ENCODE measurements at regions of chr6 and their contacts with region 1.

Region 1: DNA sequence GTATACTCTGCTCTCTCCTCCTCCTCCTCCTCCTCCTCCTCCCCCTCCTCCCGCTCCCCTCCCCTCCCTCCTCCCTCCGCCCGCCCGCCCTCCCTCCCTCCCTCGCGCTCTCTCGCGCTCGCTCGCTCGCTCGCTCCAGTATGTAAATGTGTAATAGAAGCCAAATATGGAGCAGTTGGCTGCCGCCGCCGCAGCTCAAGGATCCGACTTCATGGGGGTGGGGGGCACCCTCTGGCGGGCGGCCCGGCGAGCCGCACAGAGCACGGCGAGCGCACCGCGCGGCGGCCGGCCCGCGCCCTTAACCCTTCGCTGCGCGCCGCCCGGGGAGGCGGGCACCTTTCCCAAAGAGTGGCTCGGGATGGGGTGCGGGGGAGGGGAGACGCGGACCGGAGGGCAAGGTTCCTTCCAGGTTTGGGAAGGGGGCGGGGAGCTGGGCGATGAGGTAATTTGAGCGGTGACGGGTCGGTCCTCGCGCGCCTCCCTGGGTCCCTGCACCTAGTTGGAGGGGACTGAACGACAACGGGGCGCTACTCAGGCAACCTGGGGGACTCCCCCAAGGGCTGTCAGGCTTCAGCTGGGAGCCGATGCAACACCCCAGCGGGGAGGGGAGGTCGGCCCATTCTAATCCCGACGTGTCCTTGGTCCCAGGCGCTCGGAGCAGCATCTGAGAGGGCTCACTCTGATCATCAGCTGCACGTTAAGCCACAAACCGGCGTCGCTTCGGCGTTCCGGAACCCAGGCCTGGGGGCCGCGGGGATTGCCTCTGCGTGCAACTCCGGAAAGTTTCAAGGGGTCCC is 409 bp upstream of the ATXN1 start:
- DNase-seq: no peak
- ATAC-seq: peak; percentile 64
- H3K4me3 ChIP-seq: peak overlapping the region; percentile 80
- H3K27ac ChIP-seq: peak overlapping the region; percentile 68
- H3K4me1 ChIP-seq: peaks cover 8% of the 10 kb centered on the region; the same call in 1 of the 2 replicates
- H3K27me3 ChIP-seq: no peaks in the 10 kb centered on the region
- CTCF ChIP-seq: peak; percentile 24 to 48 (median 41); a peak in 3 of 6 replicates
- EP300 ChIP-seq: no peak; a peak in 1 of 4 replicates
- POLR2A ChIP-seq: peak; percentile 68
- RAD21 ChIP-seq: peak; percentile 64

Region 2: DNA sequence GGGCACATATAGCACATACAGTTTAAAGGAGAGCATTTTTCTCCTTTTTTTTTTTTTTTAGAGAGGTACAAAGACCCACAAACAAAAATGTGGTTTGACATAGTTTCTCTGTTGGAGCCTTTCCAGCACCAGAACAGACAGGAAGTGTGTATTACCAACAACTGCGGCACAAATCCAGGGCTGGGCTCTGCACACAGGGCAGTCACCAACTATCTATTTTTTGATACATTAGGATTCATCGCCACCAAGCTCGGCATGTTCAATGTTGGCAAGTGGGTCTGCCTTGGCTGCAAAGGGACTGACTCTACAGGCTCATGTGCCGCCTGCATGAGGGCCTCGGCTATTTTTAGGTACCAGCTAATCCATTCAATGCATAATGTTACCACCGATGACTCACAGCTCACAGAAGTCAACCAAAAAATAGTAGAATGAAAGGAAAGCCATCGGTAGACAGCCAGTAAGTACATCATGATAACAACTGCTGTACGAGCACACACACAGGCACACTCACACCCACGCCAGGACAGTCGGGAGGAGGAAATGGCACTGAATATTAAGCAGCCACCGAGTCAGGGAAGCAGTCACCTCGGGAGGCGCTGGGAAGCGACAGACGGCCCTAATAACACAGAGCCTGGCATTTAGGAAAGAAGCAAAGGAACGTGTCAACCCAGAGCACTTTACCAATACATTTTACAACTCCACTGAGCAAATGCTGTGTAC is 441.7 kb before region 1 on chr6:
- CTCF ChIA-PET with region 1: interaction called, 16 read pairs
- POLR2A ChIA-PET with region 1: interaction called, 3 read pairs
- RAD21 ChIA-PET with region 1: interaction called, 18 read pairs
- SMC1A ChIA-PET with region 1: interaction called, 7 read pairs
- in situ Hi-C with region 1: no loop called
- intact Hi-C with region 1: no loop called
- DNase-seq: peak; percentile 59
- ATAC-seq: peak; percentile 90
- H3K4me3 ChIP-seq: peak overlapping the region; percentile 43
- H3K27ac ChIP-seq: peak overlapping the region; percentile 56
- H3K4me1 ChIP-seq: peaks cover 31% of the 10 kb centered on the region
- H3K27me3 ChIP-seq: no peaks in the 10 kb centered on the region
- CTCF ChIP-seq: no peak
- EP300 ChIP-seq: 0 out of 4 replicates have a peak, but pooled peaks of 1 of the 2 experiments have one; percentile 9
- POLR2A ChIP-seq: 0 out of 2 replicates have a peak, but pooled peaks have one; percentile 26
- RAD21 ChIP-seq: no peak

Region 3: GRCh38 chr6:16420715-16421461 is 340.8 kb before region 1 on chr6:
- CTCF ChIA-PET with region 1: interaction called, 25 read pairs
- POLR2A ChIA-PET with region 1: interaction called, 7 read pairs
- RAD21 ChIA-PET with region 1: interaction called, 38 read pairs
- SMC1A ChIA-PET with region 1: interaction called, 20 read pairs
- in situ Hi-C with region 1: loop called (anchors 10 kb)
- intact Hi-C with region 1: no loop called
- DNase-seq: peak; percentile 97
- ATAC-seq: peak; percentile 68
- H3K4me3 ChIP-seq: no peak overlapping the region
- H3K27ac ChIP-seq: peak overlapping the region; percentile 98
- H3K4me1 ChIP-seq: peaks cover 36% of the 10 kb centered on the region
- H3K27me3 ChIP-seq: no peaks in the 10 kb centered on the region
- CTCF ChIP-seq: no peak
- EP300 ChIP-seq: peak; percentile 91; a peak in 3 of 4 replicates
- POLR2A ChIP-seq: peak; percentile 48; the same call in 1 of the 2 replicates
- RAD21 ChIP-seq: 0 out of 2 replicates have a peak, but pooled peaks have one; percentile 18

Region 4: GRCh38 chr6:16503970-16504415 is 257.7 kb before region 1 on chr6:
- CTCF ChIA-PET with region 1: interaction called, 174 read pairs
- POLR2A ChIA-PET with region 1: interaction called, 3 read pairs
- RAD21 ChIA-PET with region 1: interaction called, 110 read pairs
- SMC1A ChIA-PET with region 1: interaction called, 111 read pairs
- in situ Hi-C with region 1: no loop called
- intact Hi-C with region 1: no loop called
- DNase-seq: peak; percentile 92
- ATAC-seq: peak; percentile 85
- H3K4me3 ChIP-seq: no peak overlapping the region; the same call in 1 of the 2 replicates
- H3K27ac ChIP-seq: peak overlapping the region; percentile 70
- H3K4me1 ChIP-seq: peaks cover 50% of the 10 kb centered on the region
- H3K27me3 ChIP-seq: no peaks in the 10 kb centered on the region
- CTCF ChIP-seq: no peak
- EP300 ChIP-seq: peak; percentile 85 to 90
- POLR2A ChIP-seq: no peak
- RAD21 ChIP-seq: no peak

Region 5: DNA sequence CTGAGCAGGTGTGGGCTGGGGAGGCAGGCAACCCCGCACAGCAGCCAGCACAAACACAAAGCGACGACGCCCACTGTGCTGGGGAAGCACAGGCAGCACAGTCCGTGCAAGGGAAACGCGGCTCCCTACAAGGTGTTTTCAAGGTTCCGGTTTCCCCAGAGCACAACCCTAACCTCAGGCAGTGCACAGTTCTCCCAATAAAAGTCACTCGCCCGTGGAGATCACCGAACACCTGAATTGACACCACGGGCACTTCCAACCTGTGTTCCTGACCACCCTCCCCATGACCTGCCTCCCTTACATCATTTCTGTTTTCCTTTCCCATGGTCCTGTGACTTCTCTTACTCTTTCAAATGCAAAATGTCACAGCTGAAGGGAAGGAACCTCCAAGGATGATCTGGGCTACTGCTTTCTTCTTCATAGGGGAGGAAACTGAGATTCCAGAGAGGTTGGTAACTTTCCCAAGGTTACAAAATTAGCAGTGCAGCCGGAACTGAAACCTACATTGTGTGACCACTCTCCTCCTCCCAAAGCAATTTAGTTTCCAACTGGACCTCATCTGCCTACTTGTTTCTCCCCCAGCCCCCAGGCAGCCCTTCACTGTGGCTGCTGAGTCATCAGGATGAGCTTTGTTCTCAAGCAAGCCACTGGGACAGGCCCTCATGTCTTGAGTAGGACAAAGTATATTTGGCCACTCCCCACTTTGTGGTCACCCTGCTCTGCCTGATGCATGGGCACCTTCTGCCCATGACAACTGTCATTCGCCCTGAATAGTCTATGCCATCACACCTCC is 125.7 kb before region 1 on chr6:
- CTCF ChIA-PET with region 1: interaction called, 16 read pairs
- POLR2A ChIA-PET with region 1: no interaction called
- RAD21 ChIA-PET with region 1: interaction called, 9 read pairs
- SMC1A ChIA-PET with region 1: interaction called, 6 read pairs
- in situ Hi-C with region 1: no loop called
- intact Hi-C with region 1: loop called (anchors 1 kb)
- DNase-seq: peak; percentile 80
- ATAC-seq: peak; percentile 81
- H3K4me3 ChIP-seq: peak overlapping the region; percentile 36; the same call in 1 of the 2 replicates
- H3K27ac ChIP-seq: peak overlapping the region; percentile 66
- H3K4me1 ChIP-seq: peaks cover 39% of the 10 kb centered on the region
- H3K27me3 ChIP-seq: no peaks in the 10 kb centered on the region
- CTCF ChIP-seq: no peak
- EP300 ChIP-seq: peak in 1 of 2 experiments; percentile 20; a peak in 2 of 4 replicates
- POLR2A ChIP-seq: no peak
- RAD21 ChIP-seq: no peak

Region 6: GRCh38 chr6:16731478-16732051 is 30.1 kb before region 1 on chr6:
- CTCF ChIA-PET with region 1: interaction called, 40 read pairs
- POLR2A ChIA-PET with region 1: interaction called, 4 read pairs
- RAD21 ChIA-PET with region 1: interaction called, 35 read pairs
- SMC1A ChIA-PET with region 1: interaction called, 26 read pairs
- in situ Hi-C with region 1: no loop called
- intact Hi-C with region 1: loop called (anchors 2 kb)
- DNase-seq: peak; percentile 61
- ATAC-seq: peak; percentile 95
- H3K4me3 ChIP-seq: peak overlapping the region; percentile 59; the same call in 1 of the 2 replicates
- H3K27ac ChIP-seq: peak overlapping the region; percentile 28; the same call in 1 of the 2 replicates
- H3K4me1 ChIP-seq: peaks cover 17% of the 10 kb centered on the region
- H3K27me3 ChIP-seq: no peaks in the 10 kb centered on the region
- CTCF ChIP-seq: no peak
- EP300 ChIP-seq: peak; percentile 86 to 89
- POLR2A ChIP-seq: no peak
- RAD21 ChIP-seq: no peak

Region 7: DNA sequence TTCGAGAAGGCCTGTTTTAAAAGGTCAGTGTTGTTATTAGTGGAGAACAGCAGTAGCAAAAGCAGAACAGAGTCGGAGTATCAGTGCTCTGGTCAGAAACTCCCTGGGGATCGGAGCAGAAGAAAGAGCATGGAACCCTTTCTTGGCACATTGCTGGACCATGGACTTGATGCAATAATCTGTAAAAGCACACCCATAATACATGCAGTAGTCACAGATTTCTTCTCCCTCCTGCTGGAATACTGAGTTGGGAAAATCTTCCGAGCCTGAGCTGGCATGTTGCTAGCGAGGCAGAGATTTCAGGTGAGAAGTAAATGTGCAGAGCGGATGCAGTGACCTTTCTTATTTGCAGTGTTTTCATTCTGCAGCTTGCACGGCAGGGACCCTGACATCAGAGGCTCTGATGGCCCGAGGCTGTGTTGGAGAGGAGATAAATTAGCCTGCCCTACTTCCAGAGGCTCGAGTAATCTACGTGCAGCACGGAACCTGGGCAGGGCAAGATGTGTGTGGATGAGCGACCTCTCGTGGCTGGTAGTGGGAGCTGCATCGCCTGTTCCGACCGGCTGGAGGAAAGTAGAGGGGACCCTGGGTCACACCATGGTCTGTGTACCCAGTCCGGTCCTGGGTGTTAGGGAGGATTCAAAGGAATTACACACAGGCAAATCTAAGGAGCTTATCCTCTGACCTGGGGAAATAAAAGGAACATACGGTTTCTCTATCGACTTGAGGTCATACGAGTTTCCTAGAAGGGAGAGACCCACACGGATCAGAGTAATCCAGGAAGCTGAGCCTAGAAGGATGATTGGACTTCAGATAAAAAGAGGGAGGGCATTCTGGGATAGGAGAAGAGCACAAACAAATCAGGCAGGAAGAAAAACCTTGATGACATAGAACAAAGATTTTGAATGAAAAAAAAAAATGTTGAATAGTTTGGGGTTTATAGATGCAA is 203.2 kb after region 1 on chr6:
- CTCF ChIA-PET with region 1: interaction called, 95 read pairs
- POLR2A ChIA-PET with region 1: no interaction called
- RAD21 ChIA-PET with region 1: interaction called, 33 read pairs
- SMC1A ChIA-PET with region 1: interaction called, 24 read pairs
- in situ Hi-C with region 1: no loop called
- intact Hi-C with region 1: loop called (anchors 2 kb)
- DNase-seq: peak; percentile 12
- ATAC-seq: peak; percentile 99
- H3K4me3 ChIP-seq: no peak overlapping the region
- H3K27ac ChIP-seq: no peak overlapping the region
- H3K4me1 ChIP-seq: no peaks in the 10 kb centered on the region
- H3K27me3 ChIP-seq: no peaks in the 10 kb centered on the region; a peak in 1 of 4 replicates
- CTCF ChIP-seq: peak; percentile 81 to 95 (median 92)
- EP300 ChIP-seq: no peak
- POLR2A ChIP-seq: no peak
- RAD21 ChIP-seq: peak; percentile 85

Measured in GM12878 (cell line).